Vagina (tissue), 2 donors: ENCODE measurements at regions of chr20 and their contacts with region 1.

Region 1: DNA sequence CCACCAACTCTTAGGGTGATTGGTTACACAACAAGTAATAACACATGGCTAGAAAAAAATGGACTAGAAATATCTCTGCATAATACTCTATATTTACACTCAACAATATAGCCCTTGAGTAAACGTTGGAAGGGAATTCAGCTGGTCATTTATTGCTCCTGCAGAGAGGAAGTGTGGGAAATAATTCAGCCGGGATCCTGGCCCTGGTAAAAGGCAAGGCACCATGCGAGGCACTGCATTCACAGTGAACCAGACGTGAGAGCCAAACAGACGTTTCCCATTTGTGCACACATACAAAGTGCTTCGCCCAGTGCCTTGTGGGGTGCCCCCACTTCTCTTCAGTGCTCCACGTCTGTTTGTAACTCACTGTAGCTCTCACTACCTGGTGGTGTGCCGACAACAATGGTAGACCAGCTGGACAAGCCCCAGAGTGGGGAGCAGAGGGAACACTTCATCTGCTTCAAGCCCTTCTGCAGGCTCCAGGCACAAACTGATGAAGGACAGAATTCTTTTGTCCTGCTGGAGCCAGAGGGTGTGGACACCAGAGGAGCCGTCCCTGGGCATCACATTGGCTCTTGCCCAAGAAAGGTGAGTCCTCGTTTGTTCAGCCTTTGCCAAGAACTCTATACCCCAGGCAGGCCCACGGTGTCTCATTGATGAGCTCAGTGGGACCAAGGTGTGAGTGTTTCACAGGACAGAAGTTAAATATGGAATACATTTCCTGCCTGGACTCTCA is 18.8 kb downstream of the SYNDIG1 start:
- DNase-seq: no peak
- H3K4me3 ChIP-seq: no peak overlapping the region
- H3K27ac ChIP-seq: no peak overlapping the region
- H3K4me1 ChIP-seq: no peaks in the 10 kb centered on the region
- H3K27me3 ChIP-seq: no peaks in the 10 kb centered on the region
- CTCF ChIP-seq: no peak
- POLR2A ChIP-seq: no peak

Region 2: GRCh38 chr20:23874747-23875146 is 613.5 kb before region 1 on chr20:
- intact Hi-C with region 1: no loop called
- DNase-seq: no peak
- H3K4me3 ChIP-seq: no peak overlapping the region
- H3K27ac ChIP-seq: no peak overlapping the region
- H3K4me1 ChIP-seq: no peaks in the 10 kb centered on the region
- H3K27me3 ChIP-seq: no peaks in the 10 kb centered on the region
- CTCF ChIP-seq: no peak
- POLR2A ChIP-seq: no peak

Region 3: DNA sequence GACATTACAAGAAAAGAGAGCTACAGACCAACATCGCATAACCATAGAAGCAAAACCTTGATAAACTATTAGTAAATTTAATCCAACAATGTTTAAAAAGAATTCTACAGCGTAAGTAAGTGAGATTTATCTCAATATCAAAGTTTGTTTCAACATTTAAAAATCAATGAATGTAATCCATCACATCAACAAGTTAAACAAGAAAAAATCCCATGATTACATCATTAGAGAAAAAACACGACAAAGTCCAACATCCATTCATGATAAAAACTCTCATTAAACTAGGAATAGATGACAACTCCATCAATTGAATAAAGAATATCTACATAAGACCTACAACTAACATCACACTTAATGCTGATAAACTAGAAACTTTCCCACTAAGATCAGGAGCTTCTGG is 260.6 kb before region 1 on chr20:
- intact Hi-C with region 1: no loop called
- DNase-seq: no peak
- H3K4me3 ChIP-seq: no peak overlapping the region
- H3K27ac ChIP-seq: no peak overlapping the region
- H3K4me1 ChIP-seq: no peaks in the 10 kb centered on the region
- H3K27me3 ChIP-seq: no peaks in the 10 kb centered on the region
- CTCF ChIP-seq: no peak
- POLR2A ChIP-seq: no peak

Region 4: DNA sequence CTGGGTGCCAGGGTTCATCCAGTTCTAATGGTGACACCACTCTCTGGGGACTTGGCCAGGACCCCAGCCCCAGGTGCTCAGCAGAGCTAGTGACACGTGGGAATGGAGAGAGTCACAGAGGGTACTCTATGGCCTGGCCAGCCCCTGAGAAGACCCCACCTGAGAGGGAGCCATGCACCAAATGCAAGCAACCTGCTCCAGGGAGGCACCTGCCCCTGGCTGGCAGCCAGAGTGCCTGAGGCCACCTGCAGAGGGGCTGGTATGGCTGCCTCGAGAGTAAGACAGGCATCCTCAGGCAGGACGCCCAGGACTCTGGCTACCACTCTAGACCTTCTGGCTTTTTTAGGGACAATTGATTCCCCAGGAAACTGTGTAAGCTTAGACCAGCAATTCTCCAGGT is 422.2 kb after region 1 on chr20:
- intact Hi-C with region 1: loop called (anchors 5 kb)
- DNase-seq: peak; percentile 78 to 81
- H3K4me3 ChIP-seq: no peak overlapping the region
- H3K27ac ChIP-seq: no peak overlapping the region
- H3K4me1 ChIP-seq: no peaks in the 10 kb centered on the region
- H3K27me3 ChIP-seq: no peaks in the 10 kb centered on the region
- CTCF ChIP-seq: no peak
- POLR2A ChIP-seq: no peak